CD4-positive, alpha-beta T cell (primary cell): ENCODE measurements at regions of chr12 and their contacts with region 1.

Region 1: GRCh38 chr12:96083020-96083719 is 47.8 kb upstream of the LTA4H start:
- DNase-seq: no peak
- ATAC-seq: no peak
- H3K4me3 ChIP-seq: no peak overlapping the region
- H3K4me3 Mint-ChIP-seq: no peak overlapping the region
- H3K27ac ChIP-seq: no peak overlapping the region
- H3K27ac Mint-ChIP-seq: no peak overlapping the region
- H3K4me1 ChIP-seq: peaks cover 2% of the 10 kb centered on the region
- H3K4me1 Mint-ChIP-seq: no peaks in the 10 kb centered on the region
- H3K27me3 ChIP-seq: no peaks in the 10 kb centered on the region
- H3K27me3 Mint-ChIP-seq: no peaks in the 10 kb centered on the region
- CTCF ChIP-seq: no peak

Region 2: DNA sequence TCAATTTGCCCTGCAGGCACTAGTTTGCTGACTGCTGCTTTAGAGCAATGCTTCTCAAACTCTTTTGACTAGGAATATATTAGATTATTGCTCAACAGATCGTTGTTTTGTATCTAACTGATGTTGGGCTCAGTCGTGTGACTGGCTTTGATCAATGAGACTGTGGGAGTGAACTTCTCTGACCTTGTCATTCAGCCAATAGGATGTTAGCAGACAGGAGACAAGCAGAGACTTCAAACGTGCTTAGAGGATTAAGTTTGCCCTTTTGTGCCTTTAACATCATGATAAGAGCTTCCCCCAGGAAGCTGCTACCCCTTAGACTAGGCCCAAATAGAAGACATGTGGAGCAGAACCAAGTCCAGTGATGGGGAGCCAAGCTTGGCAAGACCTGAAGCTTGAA is 34.3 kb after region 1 on chr12:
- CTCF ChIA-PET with region 1: no interaction called
- POLR2A ChIA-PET with region 1: no interaction called
- intact Hi-C with region 1: loop called in 1 of 2 experiments (anchors 5 kb)
- DNase-seq: peak in 1 of 14 experiments; percentile 11
- ATAC-seq: peak; percentile 46
- H3K4me3 ChIP-seq: no peak overlapping the region
- H3K4me3 Mint-ChIP-seq: no peak overlapping the region
- H3K27ac ChIP-seq: no peak overlapping the region
- H3K27ac Mint-ChIP-seq: no peak overlapping the region
- H3K4me1 ChIP-seq: peaks cover 8% of the 10 kb centered on the region
- H3K4me1 Mint-ChIP-seq: peaks cover 6% of the 10 kb centered on the region
- H3K27me3 ChIP-seq: no peaks in the 10 kb centered on the region
- H3K27me3 Mint-ChIP-seq: no peaks in the 10 kb centered on the region
- CTCF ChIP-seq: no peak